Adrenal gland (tissue), 19 donors: ENCODE measurements at regions of chr1 and their contacts with region 1.

Region 1: DNA sequence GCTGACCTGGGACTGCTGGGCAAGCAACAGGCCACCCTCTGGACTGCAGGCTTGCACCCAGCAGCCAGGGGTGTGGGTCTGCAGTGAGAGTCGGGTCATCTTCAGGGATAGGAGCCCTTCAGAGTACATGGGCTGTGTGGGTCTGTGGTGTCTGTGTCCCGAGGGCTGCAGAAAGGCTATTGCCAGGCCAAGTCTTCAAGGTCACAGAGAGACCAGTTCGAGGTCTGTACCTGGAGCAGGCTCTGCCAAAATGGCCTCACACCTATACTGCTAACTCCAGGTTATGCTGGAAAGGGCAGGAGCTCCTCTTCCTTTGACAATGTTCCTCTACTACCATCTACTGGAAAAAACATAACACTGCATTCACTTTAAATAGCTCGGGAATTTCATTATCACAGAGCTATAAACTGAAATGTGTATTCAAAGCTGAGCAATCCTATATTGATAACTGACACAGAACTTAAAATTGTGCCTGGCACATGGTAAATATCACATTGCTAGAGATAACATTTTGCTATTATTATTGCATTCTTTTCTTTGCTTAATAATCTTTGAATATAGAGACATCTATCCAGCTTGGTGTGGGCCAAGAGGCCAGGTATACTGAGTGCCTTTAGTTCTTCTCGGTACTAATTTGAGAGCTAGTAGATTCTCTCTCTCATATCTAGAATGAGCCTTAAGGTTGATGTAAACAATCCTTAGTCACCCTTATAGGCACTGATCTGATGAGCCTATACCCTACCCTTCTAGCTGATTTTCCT is 6.9 kb upstream of the DNAH14 start:
- DNase-seq: peak in 3 of 7 donors; percentile 7 to 28 (median 21)
- H3K4me3 ChIP-seq: no peak overlapping the region
- H3K27ac ChIP-seq: no peak overlapping the region
- H3K4me1 ChIP-seq: no peaks in the 10 kb centered on the region
- H3K27me3 ChIP-seq: no peaks in the 10 kb centered on the region
- CTCF ChIP-seq: peak; percentile 60 to 81 (median 72)
- POLR2A ChIP-seq: no peak

Region 2: DNA sequence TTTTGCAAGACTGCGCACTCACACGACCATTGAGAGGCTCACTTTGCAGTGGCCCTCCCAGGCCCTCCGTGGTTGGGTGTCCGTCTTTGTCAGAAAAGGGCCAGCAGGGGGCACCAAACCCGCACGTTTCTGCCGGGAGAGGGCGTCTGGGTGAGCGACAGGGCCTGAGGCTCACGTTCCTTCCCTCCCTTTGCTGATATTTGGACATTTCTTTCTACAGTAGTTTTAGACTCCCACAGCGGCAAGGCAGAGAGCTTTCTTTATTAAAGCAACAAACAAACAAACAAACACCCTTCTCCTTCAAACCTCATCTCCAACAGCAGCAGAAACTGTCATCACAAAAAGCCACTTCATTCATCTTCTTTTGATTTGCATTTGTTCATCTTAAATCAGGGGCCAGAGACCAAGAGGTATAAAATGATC is 408.8 kb before region 1 on chr1:
- intact Hi-C with region 1: loop called (anchors 5 to 10 kb)
- DNase-seq: peak; percentile 78 to 92 (median 83)
- H3K4me3 ChIP-seq: no peak overlapping the region
- H3K27ac ChIP-seq: no peak overlapping the region
- H3K4me1 ChIP-seq: no peaks in the 10 kb centered on the region
- H3K27me3 ChIP-seq: no peaks in the 10 kb centered on the region
- CTCF ChIP-seq: peak; percentile 82 to 95 (median 88)
- POLR2A ChIP-seq: no peak

Region 3: GRCh38 chr1:224519874-224520273 is 402.7 kb before region 1 on chr1:
- intact Hi-C with region 1: loop called (anchors 5 to 10 kb)
- DNase-seq: no peak
- H3K4me3 ChIP-seq: no peak overlapping the region
- H3K27ac ChIP-seq: no peak overlapping the region
- H3K4me1 ChIP-seq: no peaks in the 10 kb centered on the region
- H3K27me3 ChIP-seq: no peaks in the 10 kb centered on the region
- CTCF ChIP-seq: no peak
- POLR2A ChIP-seq: no peak

Region 4: DNA sequence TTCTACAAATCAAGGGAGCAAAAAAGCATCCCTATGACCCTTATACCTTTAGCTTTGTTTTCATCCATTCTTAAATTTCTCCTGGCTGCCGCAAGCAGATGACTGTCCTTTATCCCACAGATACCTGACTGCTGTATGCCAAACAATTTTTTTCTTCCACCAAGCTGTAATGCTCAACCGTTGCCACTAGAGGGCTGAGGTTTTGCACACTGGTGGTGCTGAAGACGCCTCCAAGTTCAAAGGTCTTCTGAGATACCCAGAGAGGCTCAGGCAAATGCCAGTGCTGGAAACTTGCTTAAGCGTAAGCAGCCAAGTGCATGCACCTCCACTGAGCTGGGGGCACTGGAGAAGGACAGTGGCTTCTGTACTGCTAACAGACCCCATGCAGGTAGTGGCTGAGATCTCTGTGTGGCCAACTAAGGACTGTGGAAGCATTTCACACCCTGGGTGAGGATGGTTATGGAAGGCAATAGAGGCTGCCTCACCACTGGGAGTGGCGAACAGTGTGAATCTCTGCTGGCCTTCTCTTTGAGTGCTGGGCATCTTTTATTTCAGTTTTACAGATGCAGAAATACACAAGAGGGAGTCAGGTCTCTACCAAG is 277.9 kb before region 1 on chr1:
- intact Hi-C with region 1: loop called in 1 of 2 experiments (anchors 5 kb)
- DNase-seq: peak; percentile 39 to 71 (median 52)
- H3K4me3 ChIP-seq: no peak overlapping the region
- H3K27ac ChIP-seq: no peak overlapping the region
- H3K4me1 ChIP-seq: no peaks in the 10 kb centered on the region
- H3K27me3 ChIP-seq: no peaks in the 10 kb centered on the region
- CTCF ChIP-seq: peak; percentile 74 to 89 (median 82)
- POLR2A ChIP-seq: no peak

Region 5: GRCh38 chr1:224791362-224791941 is 131.1 kb before region 1 on chr1:
- intact Hi-C with region 1: no loop called
- DNase-seq: no peak
- H3K4me3 ChIP-seq: no peak overlapping the region
- H3K27ac ChIP-seq: no peak overlapping the region
- H3K4me1 ChIP-seq: no peaks in the 10 kb centered on the region
- H3K27me3 ChIP-seq: no peaks in the 10 kb centered on the region
- CTCF ChIP-seq: no peak
- POLR2A ChIP-seq: no peak